ENCODE measurements at regions of chr1 and their contacts with region 1.

Region 1: DNA sequence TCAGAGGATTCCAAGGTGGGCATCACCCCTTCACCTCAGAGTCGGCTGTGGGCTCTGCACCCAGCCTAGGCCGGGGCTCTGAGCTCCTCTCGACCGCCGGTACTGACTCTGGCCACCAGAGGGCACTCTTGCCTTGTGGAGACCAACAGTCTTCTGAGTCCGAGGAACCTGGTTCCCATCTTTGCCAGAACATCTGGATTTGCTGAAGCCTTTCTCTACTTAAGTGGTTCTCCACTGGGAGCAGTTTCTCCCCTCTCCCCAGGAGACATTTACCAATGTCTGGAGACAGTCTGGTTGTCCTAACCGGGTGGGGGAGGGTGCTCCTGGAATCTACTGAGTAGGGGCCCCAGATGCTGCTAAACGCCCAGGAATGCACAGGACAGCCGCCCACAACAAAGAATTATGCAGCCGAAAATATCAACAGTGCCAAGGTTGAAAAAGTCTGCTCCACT is 9.4 kb downstream of the ETV3L start:
- DNase-seq: peak; percentile 57
- H3K4me3 ChIP-seq: no peak overlapping the region
- H3K27me3 ChIP-seq: peaks cover 1% of the 10 kb centered on the region; the same call in 1 of the 2 replicates
- CTCF ChIP-seq: peak; percentile 95

Region 2: GRCh38 chr1:157073944-157074767 is 16.1 kb before region 1 on chr1:
- CTCF ChIA-PET with region 1: interaction called, 15 read pairs
- POLR2A ChIA-PET with region 1: no interaction called
- DNase-seq: no peak
- H3K4me3 ChIP-seq: no peak overlapping the region
- H3K27me3 ChIP-seq: peaks cover 4% of the 10 kb centered on the region; the same call in 1 of the 2 replicates
- CTCF ChIP-seq: peak; percentile 69

Region 3: GRCh38 chr1:157105988-157106812 is 16.0 kb after region 1 on chr1:
- CTCF ChIA-PET with region 1: interaction called, 30 read pairs
- POLR2A ChIA-PET with region 1: no interaction called
- DNase-seq: peak; percentile 25
- H3K4me3 ChIP-seq: no peak overlapping the region
- H3K27me3 ChIP-seq: no peaks in the 10 kb centered on the region; the same call in 1 of the 2 replicates
- CTCF ChIP-seq: no peak

Region 4: GRCh38 chr1:157115851-157116736 is 25.9 kb after region 1 on chr1:
- CTCF ChIA-PET with region 1: interaction called, 11 read pairs
- POLR2A ChIA-PET with region 1: no interaction called
- DNase-seq: no peak
- H3K4me3 ChIP-seq: no peak overlapping the region
- H3K27me3 ChIP-seq: peaks cover 13% of the 10 kb centered on the region
- CTCF ChIP-seq: no peak

Region 5: GRCh38 chr1:157138220-157139051 is 48.2 kb after region 1 on chr1 and contains the start of gene ETV3:
- CTCF ChIA-PET with region 1: interaction called, 22 read pairs
- POLR2A ChIA-PET with region 1: no interaction called
- DNase-seq: peak; percentile 67
- H3K4me3 ChIP-seq: peak within 1 kb of the TSS; percentile 96
- H3K27me3 ChIP-seq: no peaks in the 10 kb centered on the region
- CTCF ChIP-seq: no peak
- polyA plus RNA-seq, gene ETV3: 7.4 and 7.9 TPM in 2 replicates

Region 6: GRCh38 chr1:157147906-157148717 is 57.9 kb after region 1 on chr1:
- CTCF ChIA-PET with region 1: interaction called, 243 read pairs
- POLR2A ChIA-PET with region 1: interaction called, 5 read pairs
- DNase-seq: no peak
- H3K4me3 ChIP-seq: no peak overlapping the region
- H3K27me3 ChIP-seq: peaks cover 8% of the 10 kb centered on the region
- CTCF ChIP-seq: no peak

Region 7: DNA sequence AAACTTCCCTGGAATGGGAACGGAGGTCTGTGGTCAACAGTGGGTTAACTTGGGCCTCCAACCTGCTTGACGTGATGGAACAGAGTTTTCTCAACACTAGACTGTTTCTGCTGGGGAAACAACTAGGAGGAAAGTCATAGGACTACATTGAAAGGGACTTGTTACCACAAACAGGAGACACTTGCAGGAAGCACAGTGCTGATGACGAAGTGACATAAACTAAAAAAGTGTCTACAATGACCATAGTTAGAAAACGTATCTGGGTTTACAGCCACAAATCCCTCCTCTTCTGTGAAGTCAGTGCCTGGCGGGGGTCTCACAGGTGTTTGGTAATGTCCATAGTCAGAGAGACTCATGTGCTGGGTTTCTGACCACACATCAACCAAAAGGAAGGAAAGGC is 375.8 kb after region 1 on chr1:
- CTCF ChIA-PET with region 1: no interaction called
- POLR2A ChIA-PET with region 1: no interaction called
- DNase-seq: no peak
- H3K4me3 ChIP-seq: no peak overlapping the region
- H3K27me3 ChIP-seq: no peaks in the 10 kb centered on the region
- CTCF ChIP-seq: no peak